ENCODE measurements at regions of chr1 and their contacts with region 1.

Region 1: DNA sequence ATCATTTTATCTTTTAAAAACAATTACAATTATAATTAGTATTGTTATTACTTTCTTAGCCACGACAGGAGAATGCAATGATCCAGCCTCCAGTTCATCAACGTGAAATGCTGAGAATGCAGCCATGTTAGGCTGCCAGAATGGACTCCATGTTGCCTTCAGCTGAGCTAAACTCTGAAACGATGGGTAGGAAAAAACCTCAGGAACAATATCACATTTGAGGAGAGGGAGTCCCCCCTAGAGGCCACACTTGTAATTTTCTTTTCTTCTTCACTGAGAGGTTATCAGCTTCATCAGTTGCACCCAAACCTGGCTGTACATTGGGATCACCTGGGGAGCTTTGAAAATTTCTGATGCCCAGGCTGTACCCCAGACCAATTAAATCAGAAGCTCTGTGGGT is 34.6 kb upstream of the DNAH14 start:
- DNase-seq: no peak
- ATAC-seq: peak; percentile 61
- H3K4me3 ChIP-seq: no peak overlapping the region
- H3K27ac ChIP-seq: no peak overlapping the region
- H3K4me1 ChIP-seq: no peaks in the 10 kb centered on the region
- H3K27me3 ChIP-seq: no peaks in the 10 kb centered on the region
- CTCF ChIP-seq: peak; percentile 17 to 20 (median 17); a peak in 3 of 6 replicates
- EP300 ChIP-seq: no peak
- POLR2A ChIP-seq: no peak
- RAD21 ChIP-seq: peak; percentile 26

Region 2: DNA sequence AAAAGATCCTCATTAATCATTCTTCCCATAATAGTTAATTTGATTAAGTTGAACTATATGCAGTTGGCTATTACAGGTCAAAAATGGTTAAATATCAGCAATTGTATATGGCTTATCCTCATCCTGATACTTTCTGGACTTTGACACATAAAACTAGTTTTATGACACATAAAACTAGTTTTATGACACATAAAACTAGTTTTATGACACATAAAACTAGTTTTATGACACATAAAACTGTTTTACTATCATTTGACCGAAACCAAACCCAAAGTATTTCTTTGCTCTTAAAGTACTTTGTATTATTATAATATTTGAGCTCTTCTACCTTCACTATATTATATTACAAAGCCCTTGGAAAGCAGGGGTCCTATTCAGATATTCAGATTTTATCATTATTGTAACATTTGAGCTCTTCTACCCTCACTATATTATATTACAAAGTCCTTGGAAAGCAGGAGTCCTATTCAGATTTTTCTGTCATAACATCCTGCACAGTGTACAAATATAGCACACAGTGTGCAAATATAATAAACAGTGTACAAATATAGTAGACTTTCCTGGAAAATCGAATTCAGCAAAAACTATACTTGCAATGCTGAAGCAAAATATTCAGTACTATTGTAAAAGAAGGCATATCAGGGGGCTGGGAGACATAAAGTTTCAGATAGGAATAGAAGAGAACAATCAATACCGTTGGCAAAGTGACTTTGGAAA is 618.0 kb before region 1 on chr1:
- CTCF ChIA-PET with region 1: no interaction called
- POLR2A ChIA-PET with region 1: no interaction called
- RAD21 ChIA-PET with region 1: no interaction called
- SMC1A ChIA-PET with region 1: no interaction called
- in situ Hi-C with region 1: no loop called
- intact Hi-C with region 1: no loop called
- DNase-seq: no peak
- ATAC-seq: no peak
- H3K4me3 ChIP-seq: no peak overlapping the region
- H3K27ac ChIP-seq: no peak overlapping the region
- H3K4me1 ChIP-seq: no peaks in the 10 kb centered on the region
- H3K27me3 ChIP-seq: no peaks in the 10 kb centered on the region
- CTCF ChIP-seq: no peak
- EP300 ChIP-seq: no peak
- POLR2A ChIP-seq: no peak
- RAD21 ChIP-seq: no peak

Region 3: DNA sequence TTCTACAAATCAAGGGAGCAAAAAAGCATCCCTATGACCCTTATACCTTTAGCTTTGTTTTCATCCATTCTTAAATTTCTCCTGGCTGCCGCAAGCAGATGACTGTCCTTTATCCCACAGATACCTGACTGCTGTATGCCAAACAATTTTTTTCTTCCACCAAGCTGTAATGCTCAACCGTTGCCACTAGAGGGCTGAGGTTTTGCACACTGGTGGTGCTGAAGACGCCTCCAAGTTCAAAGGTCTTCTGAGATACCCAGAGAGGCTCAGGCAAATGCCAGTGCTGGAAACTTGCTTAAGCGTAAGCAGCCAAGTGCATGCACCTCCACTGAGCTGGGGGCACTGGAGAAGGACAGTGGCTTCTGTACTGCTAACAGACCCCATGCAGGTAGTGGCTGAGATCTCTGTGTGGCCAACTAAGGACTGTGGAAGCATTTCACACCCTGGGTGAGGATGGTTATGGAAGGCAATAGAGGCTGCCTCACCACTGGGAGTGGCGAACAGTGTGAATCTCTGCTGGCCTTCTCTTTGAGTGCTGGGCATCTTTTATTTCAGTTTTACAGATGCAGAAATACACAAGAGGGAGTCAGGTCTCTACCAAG is 250.3 kb before region 1 on chr1:
- CTCF ChIA-PET with region 1: interaction called, 12 read pairs
- POLR2A ChIA-PET with region 1: no interaction called
- RAD21 ChIA-PET with region 1: interaction called, 7 read pairs
- SMC1A ChIA-PET with region 1: interaction called, 15 read pairs
- in situ Hi-C with region 1: no loop called
- intact Hi-C with region 1: no loop called
- DNase-seq: peak; percentile 24
- ATAC-seq: peak; percentile 85
- H3K4me3 ChIP-seq: no peak overlapping the region
- H3K27ac ChIP-seq: no peak overlapping the region
- H3K4me1 ChIP-seq: no peaks in the 10 kb centered on the region
- H3K27me3 ChIP-seq: no peaks in the 10 kb centered on the region; a peak in 1 of 4 replicates
- CTCF ChIP-seq: peak; percentile 84 to 91 (median 90)
- EP300 ChIP-seq: no peak
- POLR2A ChIP-seq: no peak
- RAD21 ChIP-seq: peak; percentile 84

Region 4: GRCh38 chr1:224873434-224874369 is 21.2 kb before region 1 on chr1:
- CTCF ChIA-PET with region 1: interaction called, 26 read pairs
- POLR2A ChIA-PET with region 1: no interaction called
- RAD21 ChIA-PET with region 1: interaction called, 3 read pairs
- SMC1A ChIA-PET with region 1: interaction called, 46 read pairs
- in situ Hi-C with region 1: no loop called
- intact Hi-C with region 1: no loop called
- DNase-seq: no peak
- ATAC-seq: no peak
- H3K4me3 ChIP-seq: no peak overlapping the region
- H3K27ac ChIP-seq: no peak overlapping the region
- H3K4me1 ChIP-seq: no peaks in the 10 kb centered on the region
- H3K27me3 ChIP-seq: no peaks in the 10 kb centered on the region; a peak in 1 of 4 replicates
- CTCF ChIP-seq: no peak
- EP300 ChIP-seq: no peak
- POLR2A ChIP-seq: no peak
- RAD21 ChIP-seq: no peak

Region 5: GRCh38 chr1:224879162-224879803 is 15.6 kb before region 1 on chr1:
- CTCF ChIA-PET with region 1: interaction called, 26 read pairs
- POLR2A ChIA-PET with region 1: interaction called, 10 read pairs
- RAD21 ChIA-PET with region 1: interaction called, 3 read pairs
- SMC1A ChIA-PET with region 1: interaction called, 46 read pairs
- in situ Hi-C with region 1: no loop called
- intact Hi-C with region 1: no loop called
- DNase-seq: no peak
- ATAC-seq: peak; percentile 16; the same call in 2 of the 3 replicates
- H3K4me3 ChIP-seq: no peak overlapping the region
- H3K27ac ChIP-seq: no peak overlapping the region
- H3K4me1 ChIP-seq: no peaks in the 10 kb centered on the region
- H3K27me3 ChIP-seq: no peaks in the 10 kb centered on the region
- CTCF ChIP-seq: no peak
- EP300 ChIP-seq: no peak
- POLR2A ChIP-seq: no peak
- RAD21 ChIP-seq: no peak

Region 6: GRCh38 chr1:224906340-224906739 is 11.4 kb after region 1 on chr1:
- CTCF ChIA-PET with region 1: interaction called, 25 read pairs
- POLR2A ChIA-PET with region 1: interaction called, 4 read pairs
- RAD21 ChIA-PET with region 1: interaction called, 10 read pairs
- SMC1A ChIA-PET with region 1: interaction called, 20 read pairs
- in situ Hi-C with region 1: no loop called
- intact Hi-C with region 1: no loop called
- DNase-seq: no peak
- ATAC-seq: peak; percentile 59
- H3K4me3 ChIP-seq: no peak overlapping the region
- H3K27ac ChIP-seq: no peak overlapping the region
- H3K4me1 ChIP-seq: no peaks in the 10 kb centered on the region
- H3K27me3 ChIP-seq: no peaks in the 10 kb centered on the region
- CTCF ChIP-seq: no peak
- EP300 ChIP-seq: no peak
- POLR2A ChIP-seq: no peak
- RAD21 ChIP-seq: no peak

Measured in GM12878 (cell line).